HAP-1 (cell line): ENCODE measurements at regions of chr11 and their contacts with region 1.

Region 1: DNA sequence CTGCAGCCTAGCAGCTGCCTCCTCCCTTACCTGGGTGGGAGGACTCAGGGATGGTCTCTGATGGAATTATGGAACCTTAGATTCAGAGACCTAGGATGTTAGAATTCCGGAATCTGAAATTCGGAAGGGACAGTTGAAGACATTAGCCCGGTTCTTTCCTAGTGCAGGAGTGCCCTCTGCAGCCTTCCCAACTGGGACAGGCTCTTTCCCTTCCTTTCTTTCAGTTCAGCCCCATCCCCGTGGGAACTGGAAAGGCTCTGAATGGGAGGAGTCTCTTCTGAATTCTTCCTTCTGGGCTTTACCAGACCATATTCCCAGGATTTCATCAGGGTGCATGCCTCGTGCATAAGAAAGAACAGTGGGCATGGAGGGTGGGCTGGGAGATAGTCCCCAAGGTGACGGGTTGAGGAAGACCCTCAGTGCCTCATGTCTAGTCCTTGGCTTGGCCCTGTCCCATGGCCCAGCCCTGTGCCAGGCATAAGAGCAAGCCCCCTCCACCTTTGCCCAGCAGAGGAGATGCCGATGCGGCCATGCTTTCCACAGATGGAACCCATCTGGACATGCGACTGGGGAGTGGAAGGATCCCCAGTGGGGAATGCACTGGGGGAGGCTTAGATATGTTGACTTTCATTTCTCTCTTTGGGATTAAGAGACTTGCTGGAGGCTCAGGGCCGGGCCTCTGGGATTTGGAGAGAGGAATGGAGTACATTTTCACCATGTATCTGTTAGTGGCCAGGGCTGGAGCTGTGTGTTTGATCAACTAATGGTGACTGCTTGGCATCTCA is 14.4 kb downstream of the DNAJB13 start:
- DNase-seq: no peak
- H3K4me3 ChIP-seq: no peak overlapping the region
- H3K4me1 ChIP-seq: no peaks in the 10 kb centered on the region
- H3K27me3 ChIP-seq: no peaks in the 10 kb centered on the region

Region 2: DNA sequence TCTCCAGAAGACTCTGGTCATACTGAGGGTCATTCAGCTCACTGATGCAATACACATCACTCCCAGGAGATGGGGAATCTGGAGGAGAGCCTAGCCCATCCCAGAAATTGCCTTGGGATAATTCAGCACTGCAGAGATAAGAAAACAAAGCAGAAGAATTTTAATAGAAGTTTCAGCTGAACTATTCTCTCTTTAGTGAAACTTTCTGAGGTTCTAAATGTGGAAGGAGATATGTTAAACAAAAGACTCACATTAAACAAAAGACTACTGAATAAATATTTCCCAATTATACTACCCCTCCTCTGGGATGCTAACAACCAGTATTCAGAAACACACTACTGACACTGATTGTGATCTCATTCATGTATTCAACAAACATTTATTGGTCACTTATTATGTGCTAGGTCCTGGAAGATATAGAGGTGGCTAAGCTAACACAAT is 157.8 kb after region 1 on chr11:
- in situ Hi-C with region 1: no loop called
- DNase-seq: peak; percentile 26 to 42
- H3K4me3 ChIP-seq: no peak overlapping the region
- H3K4me1 ChIP-seq: no peaks in the 10 kb centered on the region
- H3K27me3 ChIP-seq: no peaks in the 10 kb centered on the region

Region 3: GRCh38 chr11:74248469-74248868 is 283.2 kb after region 1 on chr11:
- in situ Hi-C with region 1: loop called (anchors 10 kb)
- DNase-seq: no peak
- H3K4me3 ChIP-seq: no peak overlapping the region
- H3K4me1 ChIP-seq: no peaks in the 10 kb centered on the region
- H3K27me3 ChIP-seq: no peaks in the 10 kb centered on the region